Mammary epithelial cell (primary cell): ENCODE measurements at regions of chr19 and their contacts with region 1.

Region 1: DNA sequence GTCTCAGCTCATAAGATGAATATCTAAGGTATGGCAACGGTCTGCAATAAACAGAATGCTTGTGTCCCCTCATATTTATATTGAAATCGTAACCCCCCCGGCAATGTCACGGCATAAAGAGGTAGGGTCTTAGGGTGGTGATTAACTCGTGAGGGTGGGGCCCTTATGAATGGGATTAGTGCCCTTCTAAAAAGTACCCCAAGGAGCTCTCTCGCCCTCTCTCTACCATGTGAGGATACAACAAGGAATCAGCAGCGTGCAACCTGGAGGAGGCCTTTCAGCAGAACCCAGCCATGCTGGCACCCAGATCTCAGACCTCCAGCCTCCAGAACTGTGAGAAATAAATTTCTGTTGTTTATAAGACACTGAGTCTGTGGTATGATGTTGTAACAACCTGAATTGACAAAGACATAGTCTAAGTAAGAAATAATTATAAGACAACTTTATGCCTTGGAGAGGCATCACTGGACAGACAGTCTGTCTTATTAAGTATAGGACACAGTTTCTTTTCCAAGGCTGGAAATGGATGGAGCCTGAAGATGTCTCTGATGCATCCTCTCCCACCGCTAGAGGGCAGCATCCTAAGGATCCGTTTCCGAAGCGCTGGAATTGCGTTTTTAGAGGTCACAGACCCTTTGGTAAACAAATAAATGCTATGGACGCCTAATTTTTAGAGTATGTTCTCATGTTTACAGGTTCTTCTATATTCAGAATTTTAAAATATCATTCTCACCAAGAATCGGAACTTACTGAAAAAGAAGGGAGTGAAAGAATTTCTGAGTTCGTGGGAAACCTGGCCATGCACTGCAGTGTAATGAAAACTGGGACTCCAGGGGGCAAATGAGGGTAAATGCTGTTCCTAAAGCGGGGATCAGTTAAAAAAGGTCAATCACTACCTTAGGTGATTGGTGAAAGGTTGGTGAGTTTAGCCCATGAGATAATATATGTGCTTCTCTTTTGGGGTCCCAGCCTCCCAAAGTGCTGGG is 13.3 kb upstream of the LEUTX start:
- DNase-seq: peak; percentile 13
- H3K4me3 ChIP-seq: no peak overlapping the region
- H3K27ac ChIP-seq: no peak overlapping the region
- H3K4me1 ChIP-seq: no peaks in the 10 kb centered on the region
- H3K27me3 ChIP-seq: no peaks in the 10 kb centered on the region
- CTCF ChIP-seq: peak; percentile 80 to 83

Region 2: GRCh38 chr19:39557441-39558151 is 207.8 kb before region 1 on chr19:
- CTCF ChIA-PET with region 1: no interaction called
- dilution Hi-C with region 1: no loop called
- in situ Hi-C with region 1: no loop called
- intact Hi-C with region 1: loop called (anchors 10 kb)
- DNase-seq: no peak
- H3K4me3 ChIP-seq: no peak overlapping the region
- H3K27ac ChIP-seq: no peak overlapping the region
- H3K4me1 ChIP-seq: no peaks in the 10 kb centered on the region
- H3K27me3 ChIP-seq: no peaks in the 10 kb centered on the region
- CTCF ChIP-seq: no peak

Region 3: GRCh38 chr19:39970675-39971379 is 205.4 kb after region 1 on chr19 and contains the start of gene PSMC4:
- CTCF ChIA-PET with region 1: no interaction called
- dilution Hi-C with region 1: no loop called
- in situ Hi-C with region 1: no loop called
- intact Hi-C with region 1: loop called (anchors 1 kb)
- DNase-seq: peak; percentile 99
- H3K4me3 ChIP-seq: peak within 1 kb of the TSS; percentile 76 to 89 (median 82)
- H3K27ac ChIP-seq: peak within 1 kb of the TSS; percentile 83
- H3K4me1 ChIP-seq: peaks cover 13% of the 10 kb centered on the region
- H3K27me3 ChIP-seq: no peaks in the 10 kb centered on the region
- CTCF ChIP-seq: peak; percentile 60 to 87
- total RNA-seq, gene PSMC4: 85.9 to 100 TPM

Region 4: GRCh38 chr19:39986643-39987042 is 221.3 kb after region 1 on chr19:
- CTCF ChIA-PET with region 1: no interaction called
- dilution Hi-C with region 1: no loop called
- in situ Hi-C with region 1: no loop called
- intact Hi-C with region 1: no loop called
- DNase-seq: no peak
- H3K4me3 ChIP-seq: no peak overlapping the region
- H3K27ac ChIP-seq: no peak overlapping the region
- H3K4me1 ChIP-seq: no peaks in the 10 kb centered on the region
- H3K27me3 ChIP-seq: no peaks in the 10 kb centered on the region
- CTCF ChIP-seq: no peak